CD4-positive, alpha-beta T cell (primary cell): ENCODE measurements at regions of chr7 and their contacts with region 1.

Region 1: DNA sequence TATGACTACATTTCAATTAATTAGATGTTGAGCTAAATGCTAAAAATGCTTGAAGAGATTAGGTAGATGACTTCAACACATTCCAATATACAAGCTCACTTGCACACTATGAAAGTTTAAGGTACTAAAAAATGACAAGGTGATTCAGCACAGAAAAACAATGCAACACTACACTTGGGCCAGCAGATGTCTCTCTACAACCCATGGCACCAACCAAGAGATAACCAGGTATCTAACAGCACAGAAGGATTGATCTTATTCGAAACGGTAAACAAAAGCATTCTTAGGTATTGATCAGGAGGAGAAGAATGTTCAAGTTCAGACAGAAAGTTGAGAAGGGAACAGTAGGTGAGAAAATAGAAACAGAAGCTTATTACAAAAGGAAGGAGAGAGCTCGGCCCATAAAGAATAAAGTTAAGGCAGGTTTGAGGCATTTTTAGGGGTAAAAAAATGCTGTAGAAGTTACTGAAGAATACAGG is 248.2 kb upstream of the KLF14 start:
- DNase-seq: peak in 4 of 14 experiments; percentile 31 to 79 (median 74)
- ATAC-seq: peak; percentile 71
- H3K4me3 ChIP-seq: peak overlapping the region; percentile 10
- H3K4me3 Mint-ChIP-seq: no peak overlapping the region
- H3K27ac ChIP-seq: peak overlapping the region; percentile 1 to 75
- H3K27ac Mint-ChIP-seq: no peak overlapping the region
- H3K4me1 ChIP-seq: peaks cover 55% of the 10 kb centered on the region
- H3K4me1 Mint-ChIP-seq: peaks cover 10% of the 10 kb centered on the region
- H3K27me3 ChIP-seq: no peaks in the 10 kb centered on the region
- H3K27me3 Mint-ChIP-seq: no peaks in the 10 kb centered on the region
- CTCF ChIP-seq: peak; percentile 79

Region 2: GRCh38 chr7:130961128-130961601 is 21.0 kb before region 1 on chr7:
- CTCF ChIA-PET with region 1: interaction called, 10 read pairs
- POLR2A ChIA-PET with region 1: interaction called, 11 read pairs
- intact Hi-C with region 1: no loop called
- DNase-seq: peak; percentile 28 to 95 (median 60)
- ATAC-seq: peak; percentile 79
- H3K4me3 ChIP-seq: peak overlapping the region; percentile 58
- H3K4me3 Mint-ChIP-seq: peak overlapping the region; percentile 91
- H3K27ac ChIP-seq: peak overlapping the region; percentile 73 to 90
- H3K27ac Mint-ChIP-seq: no peak overlapping the region
- H3K4me1 ChIP-seq: peaks cover 48% of the 10 kb centered on the region
- H3K4me1 Mint-ChIP-seq: peaks cover 49% of the 10 kb centered on the region
- H3K27me3 ChIP-seq: no peaks in the 10 kb centered on the region
- H3K27me3 Mint-ChIP-seq: no peaks in the 10 kb centered on the region
- CTCF ChIP-seq: no peak

Region 3: GRCh38 chr7:130996841-130997231 is 14.6 kb after region 1 on chr7:
- CTCF ChIA-PET with region 1: interaction called, 18 read pairs
- POLR2A ChIA-PET with region 1: interaction called, 3 read pairs
- intact Hi-C with region 1: no loop called
- DNase-seq: peak in 3 of 14 experiments; percentile 34 to 53 (median 42)
- ATAC-seq: peak; percentile 29
- H3K4me3 ChIP-seq: peak overlapping the region; percentile 0
- H3K4me3 Mint-ChIP-seq: peak overlapping the region; percentile 65
- H3K27ac ChIP-seq: peak overlapping the region in 1 of 2 donors; percentile 32
- H3K27ac Mint-ChIP-seq: peak overlapping the region; percentile 85
- H3K4me1 ChIP-seq: peaks cover 74% of the 10 kb centered on the region
- H3K4me1 Mint-ChIP-seq: peaks cover 85% of the 10 kb centered on the region
- H3K27me3 ChIP-seq: no peaks in the 10 kb centered on the region
- H3K27me3 Mint-ChIP-seq: no peaks in the 10 kb centered on the region
- CTCF ChIP-seq: no peak

Region 4: GRCh38 chr7:131031099-131031868 is 49.1 kb after region 1 on chr7:
- CTCF ChIA-PET with region 1: no interaction called
- POLR2A ChIA-PET with region 1: no interaction called
- intact Hi-C with region 1: loop called in 1 of 2 experiments (anchors 10 kb)
- DNase-seq: peak in 3 of 14 experiments; percentile 40 to 60 (median 53)
- ATAC-seq: no peak
- H3K4me3 ChIP-seq: no peak overlapping the region
- H3K4me3 Mint-ChIP-seq: peak overlapping the region; percentile 64
- H3K27ac ChIP-seq: no peak overlapping the region
- H3K27ac Mint-ChIP-seq: peak overlapping the region; percentile 79
- H3K4me1 ChIP-seq: peaks cover 64% of the 10 kb centered on the region
- H3K4me1 Mint-ChIP-seq: peaks cover 96% of the 10 kb centered on the region
- H3K27me3 ChIP-seq: no peaks in the 10 kb centered on the region
- H3K27me3 Mint-ChIP-seq: no peaks in the 10 kb centered on the region
- CTCF ChIP-seq: no peak